Calu3 (cell line): ENCODE measurements at regions of chr17 and their contacts with region 1.

Region 1: GRCh38 chr17:46940621-46941404 is 17.9 kb downstream of the GOSR2 start:
- DNase-seq: peak; percentile 90
- H3K4me3 Mint-ChIP-seq: no peak overlapping the region
- H3K27ac Mint-ChIP-seq: peak overlapping the region; percentile 41
- H3K4me1 Mint-ChIP-seq: peaks cover 25% of the 10 kb centered on the region
- H3K27me3 Mint-ChIP-seq: no peaks in the 10 kb centered on the region
- CTCF ChIP-seq: peak; percentile 95

Region 2: DNA sequence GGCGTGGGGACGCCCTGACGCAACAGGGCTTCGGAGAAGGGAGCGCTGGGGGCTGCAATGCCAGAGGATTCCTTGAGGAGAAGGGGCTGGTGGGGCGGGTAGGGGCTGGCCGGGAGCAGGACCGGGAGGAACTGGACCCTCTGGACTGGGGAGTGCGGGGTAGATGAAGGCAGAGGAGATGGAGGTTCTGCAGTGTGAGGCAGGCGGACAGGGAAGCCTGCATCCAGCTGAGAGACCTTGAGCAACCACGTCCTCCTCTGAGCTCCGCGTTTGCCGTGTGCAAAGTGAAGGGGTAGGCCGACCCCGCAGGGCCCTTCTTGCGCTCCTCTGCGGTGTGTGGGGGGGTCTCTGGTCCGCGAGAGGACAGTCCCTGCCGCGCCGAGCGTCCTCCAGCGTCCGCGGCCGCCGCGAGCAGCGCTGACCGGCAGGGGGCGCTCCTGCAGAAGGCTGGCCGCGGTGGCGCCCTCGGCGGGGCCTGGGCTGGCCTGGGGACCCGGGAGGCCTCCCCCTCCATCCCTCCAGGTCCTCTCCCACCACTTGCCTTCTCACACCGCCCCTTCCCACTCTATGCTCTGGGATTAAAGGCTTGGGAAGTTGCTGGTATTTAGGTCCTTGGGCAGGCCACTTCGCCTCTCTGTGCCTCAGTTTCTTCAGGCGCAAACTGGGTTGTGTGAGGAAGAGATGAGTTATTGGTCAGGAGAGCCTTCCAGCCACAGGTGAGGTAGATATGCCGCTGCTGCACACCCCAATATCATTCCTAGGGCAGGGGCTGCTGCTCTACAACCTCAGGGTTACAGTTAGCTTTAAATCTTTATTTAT is 99.0 kb before region 1 on chr17:
- CTCF ChIA-PET with region 1: no interaction called
- intact Hi-C with region 1: loop called (anchors 2 kb)
- DNase-seq: peak; percentile 58
- H3K4me3 Mint-ChIP-seq: peak overlapping the region; percentile 38
- H3K27ac Mint-ChIP-seq: no peak overlapping the region
- H3K4me1 Mint-ChIP-seq: no peaks in the 10 kb centered on the region
- H3K27me3 Mint-ChIP-seq: peaks cover 91% of the 10 kb centered on the region
- CTCF ChIP-seq: peak; percentile 88

Region 3: DNA sequence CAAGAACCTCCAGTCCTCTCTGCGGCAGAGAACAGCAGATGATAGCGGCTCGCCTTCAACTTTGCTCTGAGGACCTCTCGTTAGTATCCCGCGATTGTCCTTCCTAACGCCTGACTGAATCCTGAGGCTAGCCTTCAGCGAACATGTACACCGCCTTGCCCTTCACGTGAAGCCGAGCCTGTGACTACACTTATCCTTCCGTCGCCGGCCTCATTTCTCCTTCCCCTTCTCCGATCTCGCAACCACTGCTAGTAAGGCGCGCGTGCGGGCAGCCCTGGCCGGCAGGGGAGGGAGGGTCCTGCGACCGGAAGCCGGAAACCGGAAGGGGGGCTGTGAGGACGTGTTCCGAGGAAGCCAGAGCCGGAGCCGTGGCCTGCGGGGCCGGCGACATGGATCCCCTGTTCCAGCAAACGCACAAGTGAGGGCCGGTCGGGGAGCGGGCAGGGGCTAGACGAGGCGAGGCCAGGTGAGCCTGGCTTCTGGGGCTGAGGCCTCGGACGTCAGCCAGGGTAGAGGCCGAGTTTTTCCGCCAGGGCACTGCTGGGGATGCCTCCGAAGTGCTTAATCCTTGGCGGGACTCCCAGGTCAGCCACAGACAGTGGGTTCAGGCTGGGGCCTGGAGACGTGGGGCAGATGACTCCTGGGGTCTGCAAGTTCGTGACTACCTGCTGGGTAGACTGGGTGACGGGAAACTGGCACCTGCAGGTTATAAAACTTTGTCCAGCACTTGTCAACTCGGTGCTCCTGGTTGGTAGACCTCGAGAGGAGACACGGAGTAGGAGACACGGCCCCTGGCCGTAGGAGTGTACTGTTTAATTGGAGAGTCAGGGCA is 17.8 kb before region 1 on chr17 and contains the start of gene GOSR2:
- CTCF ChIA-PET with region 1: no interaction called
- intact Hi-C with region 1: no loop called
- DNase-seq: peak; percentile 97
- H3K4me3 Mint-ChIP-seq: peak within 1 kb of the TSS; percentile 87
- H3K27ac Mint-ChIP-seq: peak within 1 kb of the TSS; percentile 97
- H3K4me1 Mint-ChIP-seq: peaks cover 8% of the 10 kb centered on the region
- H3K27me3 Mint-ChIP-seq: peaks cover 15% of the 10 kb centered on the region
- CTCF ChIP-seq: no peak
- total RNA-seq, gene GOSR2: 90.7 and 91.2 TPM in 2 replicates